ENCODE measurements at regions of chr17 and their contacts with region 1.

Region 1: DNA sequence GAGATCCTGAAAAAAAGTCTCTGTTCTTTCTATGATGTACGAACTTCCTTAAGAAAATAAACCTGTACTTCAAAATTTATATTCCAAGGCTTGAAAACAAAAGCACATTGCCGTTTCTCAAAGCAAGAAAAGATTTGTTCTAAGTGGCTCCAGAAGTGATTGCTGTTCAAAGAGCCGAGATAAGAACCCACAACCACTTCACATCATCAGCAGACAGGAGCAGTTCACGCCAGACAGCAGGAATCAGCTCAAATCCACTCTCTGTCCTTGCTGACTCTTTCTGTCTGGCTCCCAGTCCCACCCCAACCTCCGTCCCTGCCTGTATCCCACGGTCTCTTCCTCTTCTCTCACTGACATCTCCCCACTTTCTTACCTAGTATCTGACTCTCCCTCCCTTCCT is 85.0 kb upstream of the MYOCD start:
- DNase-seq: no peak
- H3K4me3 ChIP-seq: peak overlapping the region; percentile 15 to 31
- H3K27ac ChIP-seq: peak overlapping the region; percentile 47 to 65
- H3K4me1 ChIP-seq: peaks cover 0 to 45% (median 0%) of the 10 kb centered on the region in 4 donors
- H3K27me3 ChIP-seq: no peaks in the 10 kb centered on the region
- CTCF ChIP-seq: no peak

Region 2: GRCh38 chr17:12627177-12627629 is 46.6 kb after region 1 on chr17:
- intact Hi-C with region 1: loop called (anchors 5 kb)
- DNase-seq: peak; percentile 82 to 94
- H3K4me3 ChIP-seq: peak overlapping the region; percentile 33 to 38
- H3K27ac ChIP-seq: peak overlapping the region; percentile 90 to 91
- H3K4me1 ChIP-seq: peaks cover 0 to 57% (median 16%) of the 10 kb centered on the region in 4 donors
- H3K27me3 ChIP-seq: no peaks in the 10 kb centered on the region
- CTCF ChIP-seq: no peak

Measured in tibial artery (tissue), 4 donors.